Esophagus muscularis mucosa (tissue), 4 donors: ENCODE measurements at regions of chr10 and their contacts with region 1.

Region 1: GRCh38 chr10:28241741-28242399 is 61.0 kb downstream of the MPP7 start:
- DNase-seq: no peak
- H3K4me3 ChIP-seq: no peak overlapping the region
- H3K27ac ChIP-seq: no peak overlapping the region
- H3K4me1 ChIP-seq: peaks cover 0 to 25% (median 19%) of the 10 kb centered on the region in 4 donors
- H3K27me3 ChIP-seq: no peaks in the 10 kb centered on the region
- CTCF ChIP-seq: peak; percentile 88 to 95 (median 93)
- EP300 ChIP-seq: no peak
- POLR2A ChIP-seq: no peak

Region 2: GRCh38 chr10:27446091-27446918 is 795.6 kb before region 1 on chr10:
- intact Hi-C with region 1: loop called (anchors 5 kb)
- DNase-seq: no peak
- H3K4me3 ChIP-seq: peak overlapping the region in 1 of 4 donors; percentile 13
- H3K27ac ChIP-seq: no peak overlapping the region
- H3K4me1 ChIP-seq: peaks cover 0 to 4% (median 0%) of the 10 kb centered on the region in 4 donors
- H3K27me3 ChIP-seq: no peaks in the 10 kb centered on the region
- CTCF ChIP-seq: peak; percentile 37 to 50 (median 50)
- EP300 ChIP-seq: no peak
- POLR2A ChIP-seq: no peak

Region 3: DNA sequence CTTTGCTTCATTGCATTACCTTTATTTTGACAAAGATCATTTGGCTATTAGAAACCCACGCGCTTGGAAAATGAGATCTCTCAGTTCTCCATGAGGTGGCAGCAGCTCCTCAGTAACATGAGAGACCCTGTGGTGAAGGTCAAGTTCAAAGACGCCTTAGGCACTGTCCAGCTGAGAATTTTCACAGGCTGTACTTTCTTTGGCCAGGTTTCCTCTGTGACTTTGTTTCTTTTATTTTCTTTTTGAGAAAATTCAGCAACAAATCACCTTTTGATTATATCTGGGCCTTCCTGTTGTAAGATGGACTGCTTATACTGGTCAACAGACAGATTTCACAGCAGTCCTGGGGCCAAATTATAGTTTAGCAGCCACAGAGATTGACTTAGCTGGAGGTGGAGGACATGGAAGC is 683.3 kb before region 1 on chr10:
- intact Hi-C with region 1: loop called (anchors 5 kb)
- DNase-seq: no peak
- H3K4me3 ChIP-seq: no peak overlapping the region
- H3K27ac ChIP-seq: no peak overlapping the region
- H3K4me1 ChIP-seq: peaks cover 0 to 6% (median 2%) of the 10 kb centered on the region in 4 donors
- H3K27me3 ChIP-seq: no peaks in the 10 kb centered on the region
- CTCF ChIP-seq: peak; percentile 66 to 79 (median 75)
- EP300 ChIP-seq: no peak
- POLR2A ChIP-seq: no peak

Region 4: DNA sequence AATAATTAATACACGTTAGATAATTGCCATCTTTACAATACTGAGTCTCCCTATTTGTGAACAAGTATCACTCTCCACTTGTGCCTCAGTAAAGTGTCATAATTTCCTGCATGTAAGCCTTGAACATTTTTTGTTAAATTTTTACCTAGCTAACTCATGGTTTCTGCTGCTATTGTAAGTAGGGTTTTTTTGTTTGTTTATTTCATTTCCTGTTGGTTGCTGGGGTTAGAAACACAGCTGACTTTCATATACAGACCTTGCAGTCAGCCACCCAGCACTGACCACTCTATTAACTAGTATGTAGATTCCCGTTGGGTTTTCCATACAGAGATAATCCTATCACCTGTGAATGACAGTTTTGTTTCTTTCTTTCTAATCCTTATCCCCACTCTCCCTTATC is 72.3 kb before region 1 on chr10:
- intact Hi-C with region 1: no loop called
- DNase-seq: no peak
- H3K4me3 ChIP-seq: no peak overlapping the region
- H3K27ac ChIP-seq: no peak overlapping the region
- H3K4me1 ChIP-seq: peaks cover 10 to 18% (median 17%) of the 10 kb centered on the region in 4 donors
- H3K27me3 ChIP-seq: no peaks in the 10 kb centered on the region
- CTCF ChIP-seq: no peak
- EP300 ChIP-seq: no peak
- POLR2A ChIP-seq: no peak

Region 5: DNA sequence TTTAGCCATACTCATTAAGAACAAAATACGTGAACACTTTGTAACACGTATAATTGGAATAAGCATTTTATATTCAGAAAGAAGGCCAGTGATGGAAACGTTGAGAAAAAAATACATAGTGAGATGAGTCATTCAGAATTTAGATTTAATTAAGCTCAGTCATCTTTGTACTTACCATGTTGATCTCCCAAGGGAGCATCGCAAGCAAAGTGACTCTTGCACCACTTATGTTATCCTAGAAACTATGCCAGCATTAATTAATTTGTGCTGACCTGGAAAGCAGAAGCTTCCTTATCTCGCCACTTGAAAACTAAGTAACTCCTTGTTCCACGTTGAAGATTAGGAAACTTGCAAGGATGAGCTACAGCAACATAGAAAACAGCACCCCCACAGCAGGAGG is 70.7 kb after region 1 on chr10:
- intact Hi-C with region 1: no loop called
- DNase-seq: no peak
- H3K4me3 ChIP-seq: no peak overlapping the region
- H3K27ac ChIP-seq: no peak overlapping the region
- H3K4me1 ChIP-seq: peaks cover 0 to under 1% (median under 1%) of the 10 kb centered on the region in 4 donors
- H3K27me3 ChIP-seq: no peaks in the 10 kb centered on the region
- CTCF ChIP-seq: no peak
- EP300 ChIP-seq: no peak
- POLR2A ChIP-seq: no peak

Region 6: GRCh38 chr10:28569506-28570159 is 327.8 kb after region 1 on chr10:
- intact Hi-C with region 1: no loop called
- DNase-seq: no peak
- H3K4me3 ChIP-seq: no peak overlapping the region
- H3K27ac ChIP-seq: no peak overlapping the region
- H3K4me1 ChIP-seq: peaks cover 54 to 97% (median 82%) of the 10 kb centered on the region in 4 donors
- H3K27me3 ChIP-seq: no peaks in the 10 kb centered on the region
- CTCF ChIP-seq: no peak
- EP300 ChIP-seq: no peak
- POLR2A ChIP-seq: no peak